ENCODE measurements at regions of chr16 and their contacts with region 1.

Region 1: DNA sequence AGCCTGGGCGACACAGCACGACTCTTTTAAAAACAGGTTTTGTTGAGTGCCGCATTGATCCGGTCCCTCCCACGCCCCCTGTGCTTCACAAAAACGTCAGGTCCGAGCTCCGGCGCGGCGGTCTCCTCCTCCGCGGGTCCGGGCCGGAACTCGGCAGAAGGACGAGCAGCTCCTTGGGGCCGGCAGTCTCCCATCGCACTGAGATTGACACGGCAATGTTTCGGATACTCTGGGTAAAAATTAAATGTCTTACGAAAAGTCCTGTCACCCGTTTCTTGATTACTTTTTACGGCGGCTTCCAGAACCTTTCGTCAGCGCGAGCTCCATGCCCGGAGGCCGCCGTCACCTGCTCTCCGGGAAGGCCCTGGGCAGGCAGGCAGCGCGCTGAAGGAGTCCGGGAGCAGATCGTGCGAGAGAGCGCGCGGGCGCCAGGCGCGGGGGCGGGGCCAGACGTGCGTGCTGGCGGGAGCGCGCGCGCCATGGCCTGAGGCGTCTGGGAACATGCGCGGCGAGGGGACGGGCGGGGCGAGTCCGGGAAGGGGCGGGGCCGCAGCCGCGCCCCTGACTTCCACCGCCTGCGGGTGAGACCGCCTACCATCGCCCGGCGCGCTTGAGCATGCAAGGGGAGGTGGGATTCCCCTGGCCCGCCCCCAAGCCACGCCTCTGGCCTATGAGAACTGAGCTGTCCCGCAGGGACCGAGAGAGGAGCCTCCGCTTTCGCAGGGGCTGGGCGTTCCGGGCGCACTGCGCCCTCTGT is 11.7 kb upstream of the SRL start:
- DNase-seq: peak; percentile 100
- H3K4me3 Mint-ChIP-seq: peak overlapping the region; percentile 94
- H3K27ac Mint-ChIP-seq: peak overlapping the region; percentile 99
- H3K4me1 Mint-ChIP-seq: peaks cover 12% of the 10 kb centered on the region
- H3K27me3 Mint-ChIP-seq: no peaks in the 10 kb centered on the region

Region 2: GRCh38 chr16:3938848-3939624 is 314.5 kb before region 1 on chr16:
- CTCF ChIA-PET with region 1: interaction called, 21 read pairs
- POLR2A ChIA-PET with region 1: no interaction called
- DNase-seq: peak; percentile 62
- H3K4me3 Mint-ChIP-seq: no peak overlapping the region
- H3K27ac Mint-ChIP-seq: no peak overlapping the region
- H3K4me1 Mint-ChIP-seq: peaks cover 4% of the 10 kb centered on the region
- H3K27me3 Mint-ChIP-seq: peaks cover 3% of the 10 kb centered on the region

Region 3: GRCh38 chr16:4116337-4117249 is 137.0 kb before region 1 on chr16 and contains the start of gene ADCY9:
- CTCF ChIA-PET with region 1: interaction called, 11 read pairs
- POLR2A ChIA-PET with region 1: no interaction called
- DNase-seq: peak; percentile 76
- H3K4me3 Mint-ChIP-seq: peak within 1 kb of the TSS; percentile 80
- H3K27ac Mint-ChIP-seq: peak within 1 kb of the TSS; percentile 51
- H3K4me1 Mint-ChIP-seq: peaks cover 41% of the 10 kb centered on the region
- H3K27me3 Mint-ChIP-seq: peaks cover 16% of the 10 kb centered on the region
- total RNA-seq, gene ADCY9: 10.4 to 12.4 TPM

Region 4: DNA sequence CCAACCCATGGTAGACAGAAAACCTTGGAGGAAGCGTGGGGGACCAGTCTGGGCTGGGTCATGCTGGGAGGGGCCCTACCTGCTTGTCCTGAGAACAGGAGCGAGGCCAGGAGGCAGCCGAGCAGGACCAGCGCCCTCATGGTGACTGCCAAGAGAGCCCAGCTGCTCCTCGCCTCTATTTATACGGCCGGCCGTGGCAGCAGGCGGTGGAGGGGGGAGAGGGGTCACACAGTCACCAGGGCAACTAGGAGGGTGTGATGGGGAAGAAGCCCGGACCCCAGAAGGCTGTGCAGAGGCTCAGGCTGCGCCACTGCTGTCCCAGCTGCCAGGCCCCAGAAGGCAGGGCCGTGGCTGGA is 11.7 kb before region 1 on chr16 and contains the start of gene SRL:
- CTCF ChIA-PET with region 1: interaction called, 17 read pairs
- POLR2A ChIA-PET with region 1: no interaction called
- DNase-seq: no peak
- H3K4me3 Mint-ChIP-seq: no peak within 1 kb of the TSS
- H3K27ac Mint-ChIP-seq: no peak within 1 kb of the TSS
- H3K4me1 Mint-ChIP-seq: peaks cover 3% of the 10 kb centered on the region
- H3K27me3 Mint-ChIP-seq: peaks cover 1% of the 10 kb centered on the region
- total RNA-seq, gene SRL: not detected

Region 5: DNA sequence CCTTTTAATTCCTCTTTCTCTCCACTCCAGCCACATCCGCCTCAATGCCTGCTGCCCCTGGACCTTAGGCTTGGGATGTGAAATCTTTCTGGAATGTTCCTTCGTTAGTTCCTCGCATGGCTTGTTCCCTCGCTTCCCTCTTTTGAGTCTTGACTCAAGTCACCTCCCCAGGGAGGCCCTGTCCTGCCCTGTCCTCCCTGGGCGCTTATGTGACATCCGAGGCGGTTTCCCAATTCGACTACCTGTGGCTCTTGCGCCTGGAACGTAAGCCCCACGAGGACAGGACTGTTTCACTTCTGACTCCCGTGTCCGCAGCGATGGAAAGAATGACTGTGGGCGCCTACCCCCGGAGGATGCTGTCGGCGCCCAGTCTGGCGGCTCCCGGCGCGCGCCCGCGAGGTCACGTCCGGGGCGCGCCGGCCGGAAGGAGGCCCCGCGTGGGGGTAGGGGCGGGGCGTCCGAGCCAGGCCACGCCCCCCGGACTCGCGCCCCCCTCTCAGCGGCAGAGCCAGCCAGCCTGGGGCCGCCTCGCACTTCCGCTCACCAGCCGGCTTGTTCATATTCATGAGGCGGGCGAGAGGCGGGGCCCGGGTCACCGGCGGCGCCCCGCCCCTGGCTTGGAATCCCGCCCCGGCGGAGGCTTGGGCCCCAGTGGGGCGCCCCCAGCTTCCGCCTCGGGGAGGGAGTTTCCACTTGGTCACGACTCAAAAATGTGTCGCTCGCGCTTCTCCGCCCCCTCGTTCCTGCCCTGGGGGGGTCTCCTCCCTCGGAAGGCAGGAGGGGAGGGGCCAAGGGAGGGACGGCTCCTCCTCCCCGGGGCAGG is 53.9 kb after region 1 on chr16:
- CTCF ChIA-PET with region 1: interaction called, 27 read pairs
- POLR2A ChIA-PET with region 1: no interaction called
- DNase-seq: peak; percentile 96
- H3K4me3 Mint-ChIP-seq: peak overlapping the region; percentile 91
- H3K27ac Mint-ChIP-seq: peak overlapping the region; percentile 97
- H3K4me1 Mint-ChIP-seq: peaks cover 34% of the 10 kb centered on the region
- H3K27me3 Mint-ChIP-seq: peaks cover 2% of the 10 kb centered on the region